Panc1 (cell line): ENCODE measurements at regions of chr21 and their contacts with region 1.

Region 1: GRCh38 chr21:41943851-41944250 is 10.0 kb downstream of the C2CD2 start:
- DNase-seq: no peak
- ATAC-seq: no peak
- H3K4me3 ChIP-seq: no peak overlapping the region
- H3K27ac ChIP-seq: no peak overlapping the region
- H3K4me1 ChIP-seq: peaks cover 5% of the 10 kb centered on the region; the same call in 1 of the 2 replicates
- H3K27me3 ChIP-seq: no peaks in the 10 kb centered on the region
- CTCF ChIP-seq: no peak

Region 2: DNA sequence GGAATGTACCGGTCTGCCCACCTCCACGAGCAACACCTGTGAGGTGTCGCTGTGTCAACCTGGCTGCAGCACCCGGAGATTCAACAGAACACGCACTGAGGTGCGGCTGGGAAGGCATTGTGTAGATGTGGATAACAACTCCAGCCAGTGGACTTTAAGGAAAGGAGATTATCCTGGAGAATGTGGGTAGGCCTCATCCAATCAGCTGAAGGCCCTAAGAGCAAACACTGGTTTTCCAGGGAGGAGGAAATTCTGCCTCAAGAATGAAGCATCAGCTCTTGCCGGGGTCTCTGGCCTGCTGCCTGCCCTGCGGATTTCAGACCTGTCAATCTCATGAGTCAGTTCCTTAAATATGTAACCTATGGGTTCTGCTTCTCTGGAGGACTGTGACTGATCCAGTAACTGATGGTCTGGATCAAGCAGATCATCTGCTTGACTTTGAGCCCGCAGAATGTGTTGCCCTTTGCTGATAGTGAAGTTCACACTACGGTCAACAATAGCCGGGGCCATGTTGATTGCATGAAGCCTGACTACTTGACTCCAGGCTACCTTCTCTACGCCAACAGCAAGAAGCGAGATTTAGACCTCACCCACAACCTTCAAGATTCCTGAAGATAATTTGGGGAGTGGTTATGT is 48.8 kb before region 1 on chr21:
- CTCF ChIA-PET with region 1: no interaction called
- POLR2A ChIA-PET with region 1: no interaction called
- in situ Hi-C with region 1: no loop called
- intact Hi-C with region 1: no loop called
- DNase-seq: no peak
- ATAC-seq: no peak
- H3K4me3 ChIP-seq: no peak overlapping the region
- H3K27ac ChIP-seq: no peak overlapping the region
- H3K4me1 ChIP-seq: no peaks in the 10 kb centered on the region
- H3K27me3 ChIP-seq: no peaks in the 10 kb centered on the region
- CTCF ChIP-seq: no peak

Region 3: DNA sequence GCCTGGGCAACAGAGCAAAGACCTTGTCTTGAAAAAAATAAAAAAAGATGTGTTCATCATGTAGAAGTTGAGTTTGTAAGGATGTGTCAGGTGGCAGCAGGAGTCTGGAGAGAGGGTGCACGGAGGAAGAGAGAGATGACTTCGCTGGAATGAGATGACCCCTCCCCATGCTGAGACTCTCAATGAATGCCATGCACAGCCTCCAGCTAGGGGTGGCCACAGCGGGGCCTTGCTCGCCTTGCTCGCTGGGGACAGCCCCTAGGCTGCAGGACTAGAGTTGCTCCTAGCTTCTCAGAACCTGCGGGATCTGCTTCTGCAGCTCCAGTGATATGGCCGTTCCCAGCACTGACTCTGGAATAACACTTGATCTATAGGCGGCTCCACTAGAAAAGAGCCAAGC is 16.5 kb after region 1 on chr21:
- CTCF ChIA-PET with region 1: no interaction called
- POLR2A ChIA-PET with region 1: interaction called, 14 read pairs
- in situ Hi-C with region 1: no loop called
- intact Hi-C with region 1: no loop called
- DNase-seq: no peak
- ATAC-seq: no peak
- H3K4me3 ChIP-seq: no peak overlapping the region
- H3K27ac ChIP-seq: no peak overlapping the region
- H3K4me1 ChIP-seq: peaks cover 23% of the 10 kb centered on the region
- H3K27me3 ChIP-seq: no peaks in the 10 kb centered on the region
- CTCF ChIP-seq: no peak